ENCODE measurements at regions of chr20 and their contacts with region 1.

Region 1: DNA sequence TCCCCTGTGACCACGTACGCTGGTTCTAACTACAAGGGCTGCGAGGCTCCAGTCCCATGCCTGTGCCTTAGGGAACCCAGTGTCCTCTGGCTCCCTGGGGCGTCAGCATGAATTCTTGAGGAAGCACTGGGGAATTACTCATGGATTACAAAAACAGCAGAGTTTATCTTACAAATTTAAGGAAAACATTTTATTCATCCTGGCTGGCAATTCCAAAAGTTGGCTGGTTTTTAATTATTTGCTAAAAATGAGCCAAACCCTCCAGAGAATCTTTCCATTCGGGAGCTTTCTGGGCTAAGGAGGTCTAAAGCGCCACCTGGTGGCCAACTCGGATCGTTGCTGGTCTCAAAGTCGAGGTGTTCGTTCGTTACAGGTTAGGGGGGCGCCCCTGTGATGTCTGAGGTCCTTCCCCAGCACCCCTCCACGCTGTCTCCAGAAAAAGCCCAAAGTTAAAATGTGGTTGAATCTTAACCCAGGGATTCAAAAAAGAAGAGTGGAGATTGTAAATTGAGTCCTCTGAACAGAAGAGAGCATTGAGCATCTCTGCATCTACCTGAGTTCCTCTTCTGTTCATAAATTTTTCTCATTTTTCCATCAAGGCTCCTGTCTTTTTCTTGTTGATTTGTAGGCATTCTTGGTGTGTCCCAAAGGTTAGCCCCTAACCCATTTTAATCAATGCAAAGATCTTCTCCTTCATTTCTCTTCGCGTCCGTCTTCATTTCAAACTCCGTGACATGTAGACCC is 99.4 kb downstream of the BFSP1 start:
- DNase-seq: peak; percentile 51 to 82
- H3K4me3 ChIP-seq: no peak overlapping the region
- H3K27ac ChIP-seq: no peak overlapping the region
- H3K4me1 ChIP-seq: peaks cover 0 to 9% (median 0%) of the 10 kb centered on the region in 4 donors
- H3K27me3 ChIP-seq: peaks cover 0 to 21% (median 0%) of the 10 kb centered on the region in 3 donors
- CTCF ChIP-seq: peak in 5 of 7 experiments; percentile 27 to 92 (median 73)
- EP300 ChIP-seq: no peak
- POLR2A ChIP-seq: no peak

Region 2: GRCh38 chr20:16801919-16802911 is 629.6 kb before region 1 on chr20:
- intact Hi-C with region 1: loop called (anchors 5 kb)
- DNase-seq: peak; percentile 68 to 83
- H3K4me3 ChIP-seq: no peak overlapping the region
- H3K27ac ChIP-seq: no peak overlapping the region
- H3K4me1 ChIP-seq: no peaks in the 10 kb centered on the region
- H3K27me3 ChIP-seq: peaks cover 0 to 77% (median 14%) of the 10 kb centered on the region in 3 donors
- CTCF ChIP-seq: peak in 5 of 7 experiments; percentile 55 to 87 (median 73)
- EP300 ChIP-seq: no peak
- POLR2A ChIP-seq: no peak

Region 3: GRCh38 chr20:17357218-17357617 is 74.6 kb before region 1 on chr20:
- intact Hi-C with region 1: no loop called
- DNase-seq: peak in 1 of 2 donors; percentile 9
- H3K4me3 ChIP-seq: no peak overlapping the region
- H3K27ac ChIP-seq: no peak overlapping the region
- H3K4me1 ChIP-seq: peaks cover 0 to 5% (median 0%) of the 10 kb centered on the region in 4 donors
- H3K27me3 ChIP-seq: no peaks in the 10 kb centered on the region
- CTCF ChIP-seq: no peak
- EP300 ChIP-seq: no peak
- POLR2A ChIP-seq: no peak